B cell (primary cell): ENCODE measurements at regions of chr15 and their contacts with region 1.

Region 1: DNA sequence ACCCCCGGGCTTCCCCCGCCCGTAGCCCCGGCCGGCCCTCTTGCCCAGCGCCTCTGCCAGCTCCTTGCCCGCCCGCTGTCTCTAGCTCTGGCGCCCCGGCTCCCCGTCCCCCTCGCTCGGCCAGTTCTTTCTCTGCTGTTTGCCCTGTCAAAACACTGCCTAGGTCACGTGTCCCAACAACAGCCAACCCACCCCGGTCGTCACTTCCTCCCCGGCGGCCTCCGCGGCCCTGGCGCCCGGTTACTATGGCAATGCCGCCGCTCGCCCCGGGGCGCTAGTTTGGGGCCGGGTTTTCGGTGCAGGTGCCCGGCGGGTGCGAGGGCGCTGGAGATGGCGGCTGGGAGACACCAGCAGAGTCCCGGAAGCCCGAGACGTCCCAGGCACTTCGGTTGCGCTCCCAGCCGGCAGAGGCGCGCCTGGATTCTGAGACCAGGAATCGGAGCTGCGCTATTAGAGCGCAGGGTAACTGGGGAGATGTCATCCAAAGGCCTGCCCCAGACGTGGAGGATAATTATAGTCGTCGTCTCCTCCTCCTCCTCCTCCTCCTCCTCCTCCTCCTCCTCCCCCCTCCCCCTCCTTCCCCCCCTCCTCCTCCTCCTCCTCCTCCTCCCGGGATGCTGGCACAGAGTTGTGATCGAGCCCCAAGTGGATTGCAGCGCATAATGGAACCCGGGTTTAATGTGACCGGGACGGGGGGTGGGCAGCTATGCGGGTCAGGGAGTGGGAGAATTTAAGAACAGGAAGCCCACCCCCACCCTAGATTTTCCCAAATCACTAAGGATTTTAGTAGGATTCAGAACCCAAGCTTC is at the start of gene ATOSA:
- DNase-seq: peak; percentile 94
- ATAC-seq: peak; percentile 63
- H3K4me3 ChIP-seq: peak within 1 kb of the TSS; percentile 87 to 92 (median 88)
- H3K4me3 Mint-ChIP-seq: peak within 1 kb of the TSS; percentile 99
- H3K27ac ChIP-seq: peak within 1 kb of the TSS; percentile 92 to 97
- H3K27ac Mint-ChIP-seq: peak within 1 kb of the TSS; percentile 99
- H3K4me1 ChIP-seq: peaks cover 51 to 65% of the 10 kb centered on the region in 2 donors
- H3K4me1 Mint-ChIP-seq: peaks cover 76% of the 10 kb centered on the region
- H3K27me3 ChIP-seq: no peaks in the 10 kb centered on the region
- H3K27me3 Mint-ChIP-seq: no peaks in the 10 kb centered on the region
- CTCF ChIP-seq: no peak
- total RNA-seq, gene ATOSA: 198 and 206 TPM in 2 replicates

Region 2: GRCh38 chr15:52179278-52180195 is 499.9 kb before region 1 on chr15:
- CTCF ChIA-PET with region 1: no interaction called
- POLR2A ChIA-PET with region 1: no interaction called
- intact Hi-C with region 1: loop called (anchors 2 kb)
- DNase-seq: peak; percentile 95
- ATAC-seq: peak; percentile 78
- H3K4me3 ChIP-seq: peak overlapping the region; percentile 67 to 97 (median 87)
- H3K4me3 Mint-ChIP-seq: peak overlapping the region; percentile 93
- H3K27ac ChIP-seq: peak overlapping the region; percentile 97
- H3K27ac Mint-ChIP-seq: peak overlapping the region; percentile 99
- H3K4me1 ChIP-seq: peaks cover 33 to 48% of the 10 kb centered on the region in 2 donors
- H3K4me1 Mint-ChIP-seq: peaks cover 59% of the 10 kb centered on the region
- H3K27me3 ChIP-seq: no peaks in the 10 kb centered on the region
- H3K27me3 Mint-ChIP-seq: no peaks in the 10 kb centered on the region
- CTCF ChIP-seq: no peak

Region 3: GRCh38 chr15:52528991-52529926 is 150.2 kb before region 1 on chr15:
- CTCF ChIA-PET with region 1: no interaction called
- POLR2A ChIA-PET with region 1: interaction called, 3 read pairs
- intact Hi-C with region 1: loop called (anchors 1 kb)
- DNase-seq: peak; percentile 92
- ATAC-seq: peak; percentile 79
- H3K4me3 ChIP-seq: peak overlapping the region; percentile 51 to 80 (median 71)
- H3K4me3 Mint-ChIP-seq: peak overlapping the region; percentile 81
- H3K27ac ChIP-seq: peak overlapping the region; percentile 73 to 90
- H3K27ac Mint-ChIP-seq: peak overlapping the region; percentile 92
- H3K4me1 ChIP-seq: peaks cover 11 to 18% of the 10 kb centered on the region in 2 donors
- H3K4me1 Mint-ChIP-seq: peaks cover 27% of the 10 kb centered on the region
- H3K27me3 ChIP-seq: no peaks in the 10 kb centered on the region
- H3K27me3 Mint-ChIP-seq: no peaks in the 10 kb centered on the region
- CTCF ChIP-seq: no peak

Region 4: DNA sequence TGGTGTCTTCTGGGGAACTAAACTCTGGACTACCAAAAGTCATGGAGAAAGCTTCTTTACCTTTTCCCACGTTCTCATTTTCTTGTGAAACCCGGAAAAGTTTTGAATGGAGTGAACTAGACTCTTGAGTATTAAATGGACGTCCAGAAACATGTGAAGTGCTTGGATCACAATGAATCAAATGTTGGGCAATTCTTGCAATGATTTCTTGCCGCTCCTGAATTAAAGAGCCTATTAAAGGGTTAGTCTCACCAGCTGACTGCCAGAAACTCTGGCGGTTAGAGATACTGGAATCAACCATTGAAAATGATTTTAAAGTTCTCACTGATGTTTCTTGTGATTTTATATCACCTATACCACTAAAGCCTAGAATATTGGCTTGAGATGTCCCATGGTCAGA is 69.8 kb before region 1 on chr15:
- CTCF ChIA-PET with region 1: no interaction called
- POLR2A ChIA-PET with region 1: no interaction called
- intact Hi-C with region 1: no loop called
- DNase-seq: no peak
- ATAC-seq: no peak
- H3K4me3 ChIP-seq: no peak overlapping the region
- H3K4me3 Mint-ChIP-seq: no peak overlapping the region
- H3K27ac ChIP-seq: no peak overlapping the region
- H3K27ac Mint-ChIP-seq: no peak overlapping the region
- H3K4me1 ChIP-seq: peaks cover 4 to 5% of the 10 kb centered on the region in 2 donors
- H3K4me1 Mint-ChIP-seq: peaks cover 18% of the 10 kb centered on the region
- H3K27me3 ChIP-seq: no peaks in the 10 kb centered on the region
- H3K27me3 Mint-ChIP-seq: no peaks in the 10 kb centered on the region
- CTCF ChIP-seq: no peak

Region 5: DNA sequence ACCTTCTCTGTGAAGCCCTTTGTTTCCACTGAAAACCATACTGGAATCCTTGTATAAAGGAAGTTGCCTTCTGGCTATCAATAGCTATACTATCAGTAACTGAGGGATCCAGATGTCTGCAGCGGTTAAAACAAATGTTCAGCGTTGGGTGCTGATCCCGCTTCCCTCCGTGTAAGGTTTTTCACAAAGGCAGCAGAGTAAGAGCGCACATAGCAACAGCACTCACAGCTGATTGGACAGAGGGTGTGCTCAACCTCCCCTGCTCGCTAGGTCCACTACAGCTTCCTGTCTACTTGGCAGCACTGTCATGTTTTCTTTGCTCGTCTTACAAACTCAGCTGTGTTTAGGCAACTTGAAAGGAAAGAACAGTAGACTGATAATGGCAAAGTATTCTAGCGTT is 27.6 kb before region 1 on chr15:
- CTCF ChIA-PET with region 1: interaction called, 3 read pairs
- POLR2A ChIA-PET with region 1: no interaction called
- intact Hi-C with region 1: loop called (anchors 2 kb)
- DNase-seq: peak; percentile 49
- ATAC-seq: peak; percentile 97
- H3K4me3 ChIP-seq: no peak overlapping the region
- H3K4me3 Mint-ChIP-seq: no peak overlapping the region
- H3K27ac ChIP-seq: peak overlapping the region in 1 of 2 donors; percentile 5
- H3K27ac Mint-ChIP-seq: peak overlapping the region; percentile 53
- H3K4me1 ChIP-seq: peaks cover 0 to 4% of the 10 kb centered on the region in 2 donors
- H3K4me1 Mint-ChIP-seq: peaks cover 21% of the 10 kb centered on the region
- H3K27me3 ChIP-seq: no peaks in the 10 kb centered on the region
- H3K27me3 Mint-ChIP-seq: no peaks in the 10 kb centered on the region
- CTCF ChIP-seq: no peak

Region 6: GRCh38 chr15:52730173-52730572 is 50.7 kb after region 1 on chr15:
- CTCF ChIA-PET with region 1: interaction called, 94 read pairs
- POLR2A ChIA-PET with region 1: interaction called, 37 read pairs
- intact Hi-C with region 1: loop called (anchors 1 kb)
- DNase-seq: peak; percentile 80
- ATAC-seq: peak; percentile 97
- H3K4me3 ChIP-seq: no peak overlapping the region
- H3K4me3 Mint-ChIP-seq: peak overlapping the region; percentile 64
- H3K27ac ChIP-seq: peak overlapping the region; percentile 46 to 60
- H3K27ac Mint-ChIP-seq: peak overlapping the region; percentile 91
- H3K4me1 ChIP-seq: peaks cover 26 to 31% of the 10 kb centered on the region in 2 donors
- H3K4me1 Mint-ChIP-seq: peaks cover 31% of the 10 kb centered on the region
- H3K27me3 ChIP-seq: no peaks in the 10 kb centered on the region
- H3K27me3 Mint-ChIP-seq: no peaks in the 10 kb centered on the region
- CTCF ChIP-seq: peak; percentile 49